HEK293 (cell line): ENCODE measurements at regions of chr17 and their contacts with region 1.

Region 1: DNA sequence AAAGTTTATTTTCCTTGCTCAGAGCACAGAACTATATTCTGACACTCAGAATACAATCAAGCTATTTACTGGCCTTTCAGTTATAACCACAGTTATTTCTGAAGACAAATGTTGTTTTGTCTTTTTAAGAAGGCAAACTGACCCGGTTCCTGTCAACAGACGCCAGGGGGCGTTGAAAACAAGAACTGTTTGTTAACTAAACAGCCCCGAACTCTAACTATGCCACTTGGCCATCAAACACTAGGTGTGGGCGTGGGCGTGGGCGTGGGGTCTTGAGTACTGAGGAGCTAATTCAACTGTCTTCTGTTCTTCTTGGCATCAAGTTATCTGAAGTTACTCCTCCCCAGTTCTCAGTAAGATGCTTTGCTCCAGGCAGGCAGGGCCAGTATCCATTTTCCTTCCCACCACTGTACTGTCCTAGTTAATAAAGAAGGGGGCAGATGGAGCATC is 63.2 kb upstream of the MTMR4 start:
- H3K4me3 ChIP-seq: no peak overlapping the region
- H3K27ac ChIP-seq: no peak overlapping the region
- H3K4me1 ChIP-seq: peaks cover 3% of the 10 kb centered on the region; the same call in 1 of the 2 replicates
- CTCF ChIP-seq: peak; percentile 52; the same call in 1 of the 2 replicates

Region 2: GRCh38 chr17:58517734-58518609 is 59.7 kb before region 1 on chr17:
- CTCF ChIA-PET with region 1: interaction called, 10 read pairs
- POLR2A ChIA-PET with region 1: no interaction called
- H3K4me3 ChIP-seq: peak overlapping the region; percentile 79
- H3K27ac ChIP-seq: peak overlapping the region; percentile 84
- H3K4me1 ChIP-seq: peaks cover 3% of the 10 kb centered on the region; the same call in 1 of the 2 replicates
- CTCF ChIP-seq: no peak

Region 3: DNA sequence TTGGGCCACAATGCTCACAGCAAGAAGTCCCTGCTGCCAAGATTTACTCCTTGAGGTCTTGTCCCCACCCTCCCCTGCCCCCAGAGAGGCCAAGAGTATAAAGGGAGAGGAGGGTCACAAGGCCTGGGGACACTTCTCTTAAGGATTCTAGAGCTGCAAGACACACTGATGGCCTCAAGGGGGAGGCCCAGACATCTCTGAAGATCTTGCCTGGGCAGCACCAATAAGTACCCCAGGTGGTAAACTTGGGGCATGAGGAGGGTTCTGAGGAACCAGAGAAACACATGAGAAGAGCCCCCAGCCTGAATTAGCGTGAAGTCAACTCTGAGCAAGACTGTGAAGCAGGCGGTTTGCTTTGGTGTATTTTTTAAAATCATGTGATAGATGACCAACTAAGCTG is 36.4 kb before region 1 on chr17:
- CTCF ChIA-PET with region 1: interaction called, 13 read pairs
- POLR2A ChIA-PET with region 1: no interaction called
- H3K4me3 ChIP-seq: no peak overlapping the region
- H3K27ac ChIP-seq: no peak overlapping the region
- H3K4me1 ChIP-seq: no peaks in the 10 kb centered on the region
- CTCF ChIP-seq: no peak

Region 4: GRCh38 chr17:58565780-58566189 is 11.9 kb before region 1 on chr17:
- CTCF ChIA-PET with region 1: interaction called, 38 read pairs
- POLR2A ChIA-PET with region 1: no interaction called
- H3K4me3 ChIP-seq: no peak overlapping the region
- H3K27ac ChIP-seq: no peak overlapping the region
- H3K4me1 ChIP-seq: no peaks in the 10 kb centered on the region; the same call in 1 of the 2 replicates
- CTCF ChIP-seq: no peak

Region 5: GRCh38 chr17:58595326-58595725 is 17.7 kb after region 1 on chr17:
- CTCF ChIA-PET with region 1: interaction called, 15 read pairs
- POLR2A ChIA-PET with region 1: no interaction called
- H3K4me3 ChIP-seq: no peak overlapping the region
- H3K27ac ChIP-seq: no peak overlapping the region
- H3K4me1 ChIP-seq: no peaks in the 10 kb centered on the region
- CTCF ChIP-seq: no peak

Region 6: GRCh38 chr17:59004338-59005111 is 426.9 kb after region 1 on chr17:
- CTCF ChIA-PET with region 1: interaction called, 10 read pairs
- POLR2A ChIA-PET with region 1: no interaction called
- H3K4me3 ChIP-seq: no peak overlapping the region
- H3K27ac ChIP-seq: no peak overlapping the region
- H3K4me1 ChIP-seq: no peaks in the 10 kb centered on the region
- CTCF ChIP-seq: peak; percentile 83